K562 (cell line): ENCODE measurements at regions of chr6 and their contacts with region 1.

Region 1: DNA sequence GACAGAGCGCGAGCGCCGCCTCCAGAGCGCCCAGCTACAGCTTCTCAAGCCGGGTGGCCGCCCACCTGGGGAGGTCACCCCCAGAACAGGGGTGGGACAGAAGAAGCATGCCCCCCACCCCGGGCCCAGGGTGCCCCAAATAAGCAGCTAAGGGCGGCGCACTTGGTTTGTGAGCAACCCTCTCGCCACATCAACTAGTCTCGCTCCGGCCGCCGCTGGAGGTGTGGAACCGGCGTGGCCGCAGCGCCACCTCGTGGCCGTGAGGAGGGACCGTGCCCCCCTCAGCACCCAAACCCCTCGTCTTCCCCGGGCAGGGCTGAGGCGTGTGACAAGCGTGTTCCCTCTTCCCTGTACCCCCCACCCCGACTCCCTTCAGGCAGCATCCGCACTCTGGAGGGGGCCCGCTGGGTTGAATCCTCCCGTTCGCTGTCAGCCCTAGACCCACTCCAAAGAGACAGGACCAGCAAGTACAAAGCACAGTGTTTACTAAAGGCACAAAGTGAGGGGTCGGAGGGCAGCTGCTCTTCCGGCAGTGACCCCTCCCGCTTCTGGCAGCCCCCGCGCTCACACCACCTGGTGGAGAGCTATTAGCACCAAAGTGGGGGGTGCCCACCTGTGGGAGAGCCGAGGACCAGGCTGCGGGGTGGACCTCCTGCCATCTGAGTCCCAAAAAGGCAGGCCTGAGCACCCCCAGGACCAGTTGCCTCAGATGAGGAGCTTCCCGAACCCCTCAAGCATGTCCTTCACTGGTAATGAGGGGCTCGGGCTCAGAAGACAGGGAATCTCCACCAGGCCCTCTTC is 45.4 kb downstream of the MDFI start:
- DNase-seq: peak; percentile 86 to 94 (median 92)
- ATAC-seq: peak; percentile 95
- H3K4me3 ChIP-seq: no peak overlapping the region
- H3K27ac ChIP-seq: no peak overlapping the region
- H3K4me1 ChIP-seq: peaks cover 0 to 15% of the 10 kb centered on the region in 2 experiments; a peak in 2 of 5 replicates
- H3K27me3 ChIP-seq: peaks cover 12 to 35% of the 10 kb centered on the region in 2 experiments; a peak in 4 of 5 replicates
- CTCF ChIP-seq: peak; percentile 93 to 97 (median 95)
- EP300 ChIP-seq: no peak
- POLR2A ChIP-seq: no peak
- RAD21 ChIP-seq: peak; percentile 84 to 94

Region 2: GRCh38 chr6:41306187-41306854 is 377.4 kb before region 1 on chr6:
- CTCF ChIA-PET with region 1: interaction called, 17 read pairs
- POLR2A ChIA-PET with region 1: no interaction called
- in situ Hi-C with region 1: no loop called
- intact Hi-C with region 1: no loop called
- DNase-seq: peak; percentile 62 to 76 (median 66)
- ATAC-seq: peak; percentile 89
- H3K4me3 ChIP-seq: no peak overlapping the region
- H3K27ac ChIP-seq: no peak overlapping the region
- H3K4me1 ChIP-seq: no peaks in the 10 kb centered on the region
- H3K27me3 ChIP-seq: peaks cover 15 to 18% of the 10 kb centered on the region in 2 experiments; a peak in 4 of 5 replicates
- CTCF ChIP-seq: peak; percentile 64 to 90 (median 68)
- EP300 ChIP-seq: no peak
- POLR2A ChIP-seq: no peak
- RAD21 ChIP-seq: peak; percentile 64 to 67

Region 3: GRCh38 chr6:41386594-41386993 is 297.1 kb before region 1 on chr6:
- CTCF ChIA-PET with region 1: no interaction called
- POLR2A ChIA-PET with region 1: no interaction called
- in situ Hi-C with region 1: no loop called
- intact Hi-C with region 1: no loop called
- DNase-seq: no peak
- ATAC-seq: no peak
- H3K4me3 ChIP-seq: no peak overlapping the region
- H3K27ac ChIP-seq: no peak overlapping the region
- H3K4me1 ChIP-seq: no peaks in the 10 kb centered on the region
- H3K27me3 ChIP-seq: peaks cover 0 to 12% of the 10 kb centered on the region in 2 experiments; a peak in 1 of 5 replicates
- CTCF ChIP-seq: no peak
- EP300 ChIP-seq: no peak
- POLR2A ChIP-seq: no peak
- RAD21 ChIP-seq: no peak

Region 4: DNA sequence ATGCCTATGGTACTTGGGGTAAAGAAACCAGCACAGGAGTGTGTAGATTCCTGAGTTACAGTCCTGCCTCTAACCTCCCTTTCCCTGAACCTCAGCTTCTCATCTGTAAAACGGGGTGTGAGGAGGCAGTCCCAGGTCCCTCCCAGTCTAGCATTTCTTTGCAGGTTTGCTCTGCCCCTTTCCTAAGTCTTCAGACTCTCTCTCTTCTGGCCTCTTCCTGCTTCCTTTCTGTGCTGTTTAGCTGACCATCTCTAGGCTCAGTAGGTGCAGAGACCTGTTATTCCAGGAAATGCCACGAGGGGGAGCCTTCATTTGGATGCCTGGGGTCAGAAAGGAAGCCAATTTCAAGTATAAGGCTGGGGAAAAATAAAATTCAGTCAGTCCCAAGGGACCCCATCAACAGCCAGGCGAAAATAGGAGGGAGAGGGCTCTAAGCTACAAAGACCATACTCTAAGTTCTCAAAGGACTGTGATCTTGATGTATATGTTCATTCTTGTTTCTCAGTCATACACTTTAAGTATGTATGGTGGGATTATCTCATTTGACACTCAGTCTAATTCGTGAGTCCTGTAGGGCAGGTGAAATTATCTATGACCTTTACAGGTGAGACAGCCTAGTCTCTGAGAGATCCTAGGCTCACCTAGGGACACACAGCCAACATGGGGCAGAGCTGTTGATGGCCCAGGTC is 259.2 kb before region 1 on chr6:
- CTCF ChIA-PET with region 1: interaction called, 6 read pairs
- POLR2A ChIA-PET with region 1: no interaction called
- in situ Hi-C with region 1: no loop called
- intact Hi-C with region 1: loop called (anchors 2 kb)
- DNase-seq: peak; percentile 78 to 86 (median 82)
- ATAC-seq: peak; percentile 92
- H3K4me3 ChIP-seq: no peak overlapping the region
- H3K27ac ChIP-seq: no peak overlapping the region
- H3K4me1 ChIP-seq: peaks cover 0 to 10% of the 10 kb centered on the region in 2 experiments; a peak in 2 of 5 replicates
- H3K27me3 ChIP-seq: peaks cover 23 to 58% of the 10 kb centered on the region in 2 experiments
- CTCF ChIP-seq: peak; percentile 84 to 94 (median 87)
- EP300 ChIP-seq: no peak
- POLR2A ChIP-seq: no peak
- RAD21 ChIP-seq: peak; percentile 73 to 76

Region 5: DNA sequence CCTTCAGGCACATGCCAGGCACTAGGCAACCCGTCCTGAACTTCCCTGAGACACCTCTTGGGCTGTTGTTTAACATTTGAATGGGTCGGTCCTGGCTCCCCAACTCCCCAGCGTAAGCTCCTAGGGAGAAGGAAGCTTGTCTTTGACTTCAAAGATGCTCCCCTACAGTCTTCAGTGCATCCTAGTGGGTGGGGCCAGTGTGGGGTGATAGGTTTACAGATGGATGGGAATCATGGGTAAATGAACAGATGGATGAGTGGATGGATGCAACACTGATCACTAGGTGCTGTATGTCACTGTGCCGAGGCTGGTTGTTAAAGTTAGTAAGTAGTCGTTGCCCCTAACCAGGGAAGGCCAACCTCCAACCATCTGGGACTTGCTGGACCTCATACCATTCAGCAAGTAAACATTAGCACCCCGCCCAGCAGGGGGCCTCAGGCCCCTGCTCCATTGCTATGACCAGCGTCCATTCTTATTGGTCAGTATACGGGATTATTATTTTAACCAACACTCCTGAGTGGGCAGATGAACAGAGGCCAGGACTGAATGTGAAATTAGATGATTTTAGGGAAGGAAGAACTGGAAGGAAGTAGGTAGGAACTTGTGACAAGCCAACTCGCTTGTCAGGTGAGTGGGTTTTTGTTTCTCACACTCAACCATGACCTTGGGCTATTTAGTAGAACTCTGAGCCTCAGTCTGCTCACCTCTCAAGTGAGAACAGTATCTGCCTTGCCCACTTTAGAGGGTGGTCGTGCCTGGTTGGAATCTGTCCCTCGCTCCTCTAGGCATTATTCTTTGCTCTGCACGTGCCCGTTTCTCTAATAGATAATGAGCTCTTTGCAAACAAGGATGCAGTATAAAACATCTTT is 220.4 kb before region 1 on chr6:
- CTCF ChIA-PET with region 1: interaction called, 7 read pairs
- POLR2A ChIA-PET with region 1: no interaction called
- in situ Hi-C with region 1: no loop called
- intact Hi-C with region 1: loop called (anchors 1 kb)
- DNase-seq: peak; percentile 78 to 89 (median 82)
- ATAC-seq: peak; percentile 98
- H3K4me3 ChIP-seq: no peak overlapping the region
- H3K27ac ChIP-seq: no peak overlapping the region
- H3K4me1 ChIP-seq: no peaks in the 10 kb centered on the region
- H3K27me3 ChIP-seq: peaks cover 13 to 40% of the 10 kb centered on the region in 2 experiments; a peak in 4 of 5 replicates
- CTCF ChIP-seq: peak; percentile 81 to 97 (median 90)
- EP300 ChIP-seq: no peak
- POLR2A ChIP-seq: no peak
- RAD21 ChIP-seq: peak; percentile 82 to 95

Region 6: GRCh38 chr6:41591859-41592502 is 91.7 kb before region 1 on chr6:
- CTCF ChIA-PET with region 1: interaction called, 11 read pairs
- POLR2A ChIA-PET with region 1: no interaction called
- in situ Hi-C with region 1: no loop called
- intact Hi-C with region 1: no loop called
- DNase-seq: peak; percentile 80 to 92 (median 91)
- ATAC-seq: peak; percentile 93
- H3K4me3 ChIP-seq: no peak overlapping the region
- H3K27ac ChIP-seq: no peak overlapping the region
- H3K4me1 ChIP-seq: peaks cover 0 to 7% of the 10 kb centered on the region in 2 experiments; a peak in 1 of 5 replicates
- H3K27me3 ChIP-seq: no peaks in the 10 kb centered on the region
- CTCF ChIP-seq: peak; percentile 93 to 98 (median 97)
- EP300 ChIP-seq: no peak
- POLR2A ChIP-seq: no peak
- RAD21 ChIP-seq: peak; percentile 89 to 96

Region 7: GRCh38 chr6:41602864-41603608 is 80.7 kb before region 1 on chr6:
- CTCF ChIA-PET with region 1: interaction called, 53 read pairs
- POLR2A ChIA-PET with region 1: interaction called, 3 read pairs
- in situ Hi-C with region 1: loop called (anchors 5 kb)
- intact Hi-C with region 1: loop called (anchors 1 kb)
- DNase-seq: peak; percentile 83 to 87 (median 84)
- ATAC-seq: peak; percentile 85
- H3K4me3 ChIP-seq: no peak overlapping the region
- H3K27ac ChIP-seq: no peak overlapping the region
- H3K4me1 ChIP-seq: peaks cover 0 to 9% of the 10 kb centered on the region in 2 experiments; a peak in 3 of 5 replicates
- H3K27me3 ChIP-seq: peaks cover 15 to 28% of the 10 kb centered on the region in 2 experiments; a peak in 3 of 5 replicates
- CTCF ChIP-seq: peak; percentile 92 to 94 (median 94)
- EP300 ChIP-seq: no peak
- POLR2A ChIP-seq: no peak
- RAD21 ChIP-seq: peak; percentile 83 to 92

Region 8: DNA sequence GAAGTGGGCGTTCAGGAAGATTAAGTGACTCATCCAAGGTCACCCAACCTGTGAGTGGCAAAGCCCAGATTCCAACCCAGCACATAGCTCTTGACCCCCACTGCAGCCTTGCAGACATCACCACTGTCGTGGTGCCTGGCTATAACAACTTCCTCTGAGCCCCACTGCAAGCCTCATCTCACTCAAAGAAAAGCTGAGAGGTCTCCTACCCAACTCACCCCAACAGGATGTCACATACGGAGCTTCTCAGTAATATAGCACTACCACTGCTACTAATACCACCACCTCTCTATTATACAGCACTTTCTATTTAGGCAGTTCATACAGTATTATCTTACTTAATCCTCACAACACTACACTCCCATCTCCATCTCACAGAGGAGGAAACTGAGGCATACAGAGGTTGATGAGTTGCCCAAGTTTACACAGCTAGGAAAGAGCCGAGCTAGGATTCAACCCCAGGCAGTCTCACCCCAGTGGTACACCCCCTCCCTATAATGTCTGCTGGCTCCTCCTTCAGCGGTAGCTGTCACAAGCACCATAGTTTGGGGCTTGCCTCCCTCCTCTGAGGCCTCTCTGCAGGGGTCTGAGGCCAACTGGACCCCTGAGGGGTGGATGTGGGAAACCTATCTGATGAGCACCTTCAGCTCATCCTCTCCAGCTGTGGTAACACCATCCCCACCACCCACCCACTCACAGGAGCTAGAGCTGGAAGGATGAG is 32.2 kb after region 1 on chr6:
- CTCF ChIA-PET with region 1: no interaction called
- POLR2A ChIA-PET with region 1: no interaction called
- in situ Hi-C with region 1: no loop called
- intact Hi-C with region 1: no loop called
- DNase-seq: no peak
- ATAC-seq: no peak
- H3K4me3 ChIP-seq: no peak overlapping the region
- H3K27ac ChIP-seq: no peak overlapping the region
- H3K4me1 ChIP-seq: peaks cover 0 to 14% of the 10 kb centered on the region in 2 experiments; a peak in 2 of 5 replicates
- H3K27me3 ChIP-seq: peaks cover 2 to 42% of the 10 kb centered on the region in 2 experiments; a peak in 4 of 5 replicates
- CTCF ChIP-seq: no peak
- EP300 ChIP-seq: no peak
- POLR2A ChIP-seq: no peak
- RAD21 ChIP-seq: no peak